ENCODE measurements at regions of chr2 and their contacts with region 1.

Region 1: GRCh38 chr2:1742681-1743395 is 1.5 kb downstream of the PXDN start:
- DNase-seq: peak; percentile 88
- H3K4me3 ChIP-seq: peak overlapping the region; percentile 59 to 82 (median 67)
- H3K27ac ChIP-seq: peak overlapping the region; percentile 87
- H3K4me1 ChIP-seq: peaks cover 25% of the 10 kb centered on the region
- H3K27me3 ChIP-seq: peaks cover 0 to 4% of the 10 kb centered on the region in 2 experiments
- CTCF ChIP-seq: peak; percentile 56 to 62
- POLR2A ChIP-seq: peak; percentile 21

Region 2: DNA sequence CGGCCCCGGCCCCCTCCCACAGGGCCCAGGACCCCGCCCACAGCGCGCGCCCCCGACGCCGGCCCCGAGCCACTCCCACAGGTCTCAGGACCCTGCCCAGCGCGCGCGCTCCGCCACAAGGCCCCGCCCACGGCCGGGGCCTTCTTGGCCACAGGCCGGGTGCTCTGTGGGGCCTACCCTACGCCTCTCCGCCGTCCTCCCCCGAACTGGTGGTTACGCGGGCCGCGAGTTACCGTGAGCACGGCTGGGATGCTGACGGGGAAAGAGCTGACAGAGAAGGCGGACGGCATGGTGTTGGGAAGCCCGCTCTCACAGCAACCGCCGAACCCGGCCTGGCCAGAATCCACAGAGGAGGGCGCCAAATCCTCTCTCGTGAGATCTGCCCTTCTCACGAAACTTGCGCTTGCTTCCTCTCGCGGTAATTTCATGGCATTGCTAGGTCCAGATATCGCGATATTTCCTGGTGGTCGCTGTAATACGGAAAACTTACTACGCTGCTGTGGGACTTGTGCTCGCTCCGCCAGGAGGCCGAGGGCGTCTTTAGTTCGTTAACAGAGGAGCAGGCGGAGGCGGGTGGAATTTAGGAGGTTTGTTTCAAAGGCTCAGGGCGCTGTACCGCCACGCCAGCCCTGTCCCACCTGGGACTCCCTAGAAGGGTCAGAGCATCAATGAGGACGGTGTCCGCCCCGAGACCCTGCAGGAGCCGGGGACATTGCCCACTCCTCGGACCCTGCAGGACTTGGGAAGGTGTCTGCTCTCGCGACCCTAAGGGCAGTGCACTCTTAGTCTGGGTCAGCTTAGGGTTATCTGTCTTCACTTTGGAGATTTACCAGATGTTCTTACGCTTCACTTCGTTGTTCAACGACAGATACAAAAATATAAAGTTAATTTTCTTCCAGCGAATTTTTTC is 1065.5 kb before region 1 on chr2 and contains the start of gene TMEM18:
- CTCF ChIA-PET with region 1: no interaction called
- POLR2A ChIA-PET with region 1: no interaction called
- dilution Hi-C with region 1: no loop called
- intact Hi-C with region 1: loop called (anchors 2 kb)
- DNase-seq: peak; percentile 98
- H3K4me3 ChIP-seq: peak within 1 kb of the TSS; percentile 39 to 80 (median 79)
- H3K27ac ChIP-seq: peak within 1 kb of the TSS; percentile 91
- H3K4me1 ChIP-seq: peaks cover 25% of the 10 kb centered on the region
- H3K27me3 ChIP-seq: no peaks in the 10 kb centered on the region
- CTCF ChIP-seq: peak in 1 of 2 donors; percentile 6
- POLR2A ChIP-seq: peak; percentile 99
- total RNA-seq, gene TMEM18: 23.1 and 23.7 TPM in 2 replicates

Region 3: DNA sequence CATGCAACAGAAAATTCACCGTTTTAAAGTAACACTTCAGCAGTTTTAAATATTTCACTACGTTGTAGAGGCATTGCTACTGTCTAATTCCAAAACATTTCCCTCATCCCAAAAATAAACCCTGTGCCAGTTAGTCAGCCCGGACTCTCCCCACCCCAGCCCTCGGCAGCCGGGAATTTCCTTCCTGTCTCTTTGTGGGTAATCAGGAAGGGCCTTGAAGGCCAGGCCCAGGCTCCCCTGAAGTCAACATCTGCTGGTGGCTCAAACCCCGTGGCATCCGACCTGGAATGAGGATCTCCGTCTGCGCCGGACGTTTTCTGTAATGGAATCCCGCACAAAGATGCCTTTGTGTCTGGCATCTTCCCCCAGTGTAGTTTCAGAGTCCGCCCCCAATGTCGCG is 572.6 kb before region 1 on chr2:
- CTCF ChIA-PET with region 1: no interaction called
- POLR2A ChIA-PET with region 1: no interaction called
- dilution Hi-C with region 1: no loop called
- intact Hi-C with region 1: no loop called
- DNase-seq: no peak
- H3K4me3 ChIP-seq: no peak overlapping the region
- H3K27ac ChIP-seq: no peak overlapping the region
- H3K4me1 ChIP-seq: no peaks in the 10 kb centered on the region
- H3K27me3 ChIP-seq: no peaks in the 10 kb centered on the region
- CTCF ChIP-seq: no peak
- POLR2A ChIP-seq: no peak

Region 4: GRCh38 chr2:1605102-1606045 is 137.5 kb before region 1 on chr2:
- CTCF ChIA-PET with region 1: no interaction called
- POLR2A ChIA-PET with region 1: no interaction called
- dilution Hi-C with region 1: no loop called
- intact Hi-C with region 1: loop called (anchors 1 kb)
- DNase-seq: peak; percentile 57
- H3K4me3 ChIP-seq: no peak overlapping the region
- H3K27ac ChIP-seq: peak overlapping the region; percentile 80
- H3K4me1 ChIP-seq: peaks cover 29% of the 10 kb centered on the region
- H3K27me3 ChIP-seq: peaks cover 0 to 2% of the 10 kb centered on the region in 2 experiments
- CTCF ChIP-seq: no peak
- POLR2A ChIP-seq: no peak

Region 5: DNA sequence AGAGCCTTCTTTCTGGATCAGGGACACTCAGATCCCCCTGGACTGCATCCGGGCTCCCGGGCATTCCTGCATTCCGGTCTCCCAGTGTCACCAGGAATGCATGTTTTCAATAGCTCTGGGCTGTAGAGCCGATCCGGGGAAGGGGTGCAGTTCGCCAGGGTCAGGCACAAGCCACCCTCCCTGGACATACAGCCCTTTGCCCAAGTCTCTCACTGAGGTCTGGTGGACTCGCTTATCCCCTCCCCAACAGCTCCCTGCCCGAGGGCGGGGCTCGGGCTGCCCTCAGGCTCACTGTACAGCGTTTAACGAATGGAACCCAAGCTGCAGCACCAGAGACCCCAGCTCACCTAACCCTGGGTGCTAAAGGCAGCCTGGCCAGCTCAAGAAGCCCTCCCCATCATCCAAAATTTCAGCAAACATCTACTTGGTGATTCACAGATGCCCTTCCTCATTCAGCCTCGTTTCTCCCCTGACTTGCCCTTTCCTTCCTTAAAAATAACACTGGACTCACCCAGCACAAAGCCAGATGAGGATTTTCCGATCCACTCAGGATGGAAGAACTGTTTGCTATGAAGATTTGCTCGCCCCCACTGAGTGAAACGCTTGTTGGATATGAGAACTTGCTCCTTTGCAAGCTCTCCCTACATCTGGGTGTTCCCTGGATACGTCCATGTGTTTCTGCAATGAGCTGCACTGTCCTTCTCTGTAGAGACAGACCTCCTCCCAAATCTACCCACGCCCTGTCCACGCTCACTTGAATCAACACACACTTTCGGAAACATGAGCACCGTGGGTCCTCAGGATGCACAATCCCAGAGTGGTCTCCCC is 56.7 kb before region 1 on chr2:
- CTCF ChIA-PET with region 1: interaction called, 4 read pairs
- POLR2A ChIA-PET with region 1: no interaction called
- dilution Hi-C with region 1: no loop called
- intact Hi-C with region 1: loop called (anchors 2 kb)
- DNase-seq: peak; percentile 8
- H3K4me3 ChIP-seq: no peak overlapping the region
- H3K27ac ChIP-seq: peak overlapping the region; percentile 21
- H3K4me1 ChIP-seq: peaks cover 9% of the 10 kb centered on the region
- H3K27me3 ChIP-seq: no peaks in the 10 kb centered on the region
- CTCF ChIP-seq: no peak
- POLR2A ChIP-seq: no peak

Region 6: DNA sequence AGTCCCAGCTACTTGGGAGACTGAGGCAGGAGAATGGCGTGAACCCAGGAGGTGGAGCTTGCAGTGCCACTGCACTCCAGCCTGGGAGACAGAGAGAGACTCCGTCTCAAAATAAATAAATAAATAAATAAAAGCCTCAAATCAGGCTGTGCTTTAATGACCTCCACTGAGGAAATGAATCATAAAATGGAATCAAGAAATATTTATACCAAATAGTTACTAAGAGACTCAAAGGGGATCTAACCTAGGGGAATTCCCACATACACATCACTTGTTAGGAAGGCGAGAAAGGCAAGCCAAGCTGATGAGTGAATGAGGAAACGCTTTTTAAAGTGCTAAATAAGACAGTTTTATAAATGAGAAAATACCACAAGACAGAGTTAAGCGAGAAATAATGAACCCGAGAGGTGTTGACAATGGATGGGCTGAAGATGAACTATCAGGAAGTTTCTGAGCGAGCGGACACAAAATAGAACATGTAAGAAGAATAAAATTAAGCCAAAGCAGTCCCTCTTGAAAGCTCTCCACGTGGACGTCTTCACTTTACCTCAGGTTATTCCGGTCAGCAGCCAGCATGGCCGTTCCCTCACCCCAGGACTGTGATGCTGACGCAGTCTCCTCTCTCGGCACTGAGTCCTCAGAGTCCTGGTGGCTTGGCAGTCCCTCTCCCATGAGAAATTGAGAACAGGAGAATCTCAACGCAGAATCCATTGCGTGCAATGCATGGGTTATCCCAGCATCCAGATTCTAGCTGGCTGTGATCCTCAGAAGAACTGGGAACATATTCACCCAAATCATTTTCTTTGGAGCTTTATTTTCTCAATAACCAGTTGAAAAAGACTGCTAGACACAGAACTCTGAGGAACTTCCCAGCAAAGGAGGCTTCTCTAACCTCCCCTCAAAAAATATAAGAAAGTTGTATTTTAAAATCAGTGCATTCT is 20.9 kb before region 1 on chr2:
- CTCF ChIA-PET with region 1: interaction called, 12 read pairs
- POLR2A ChIA-PET with region 1: interaction called, 6 read pairs
- dilution Hi-C with region 1: no loop called
- intact Hi-C with region 1: loop called (anchors 1 kb)
- DNase-seq: peak; percentile 91
- H3K4me3 ChIP-seq: peak overlapping the region in 1 of 3 experiments; percentile 51
- H3K27ac ChIP-seq: peak overlapping the region; percentile 98
- H3K4me1 ChIP-seq: peaks cover 34% of the 10 kb centered on the region
- H3K27me3 ChIP-seq: no peaks in the 10 kb centered on the region
- CTCF ChIP-seq: no peak
- POLR2A ChIP-seq: no peak

Region 7: DNA sequence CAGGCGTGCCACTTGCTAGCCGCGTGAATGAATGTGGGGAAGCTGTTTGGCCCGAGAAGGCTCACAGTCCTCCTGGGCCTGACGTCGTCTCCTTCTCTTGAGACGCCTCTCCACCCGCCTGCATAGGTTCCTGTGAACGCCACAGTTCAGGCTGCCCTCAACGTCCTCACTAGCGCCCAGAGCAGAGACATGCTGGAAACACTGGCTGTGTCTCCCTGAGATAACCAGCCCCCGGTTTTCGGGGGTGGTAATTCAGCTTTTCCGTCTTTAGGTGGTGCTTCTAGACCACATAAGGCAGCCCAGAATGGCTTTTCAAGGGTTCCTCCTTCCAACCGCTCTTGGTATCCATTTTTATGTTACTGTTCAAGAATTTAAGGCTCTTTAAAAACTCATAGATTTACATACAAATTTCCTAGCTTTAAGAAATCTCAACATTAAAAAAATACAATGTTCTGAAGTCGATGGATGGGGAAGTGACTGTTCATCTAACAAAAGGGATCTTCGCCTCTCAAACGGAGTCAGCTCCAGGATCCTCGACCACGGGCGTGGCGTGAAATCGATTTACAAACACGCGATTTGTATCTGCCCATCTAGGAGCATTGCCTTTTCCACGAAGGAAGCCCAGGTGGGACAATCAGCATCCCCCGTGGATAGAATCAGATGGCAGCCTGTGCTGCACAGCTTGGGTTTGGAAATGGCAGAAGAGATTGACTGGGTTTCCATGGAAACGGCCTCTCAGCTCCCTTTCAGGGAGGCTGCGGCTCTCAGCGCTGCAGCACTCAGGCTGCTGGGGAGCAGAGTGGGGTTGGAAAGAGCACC is 112.1 kb after region 1 on chr2:
- CTCF ChIA-PET with region 1: no interaction called
- POLR2A ChIA-PET with region 1: no interaction called
- dilution Hi-C with region 1: no loop called
- intact Hi-C with region 1: no loop called
- DNase-seq: no peak
- H3K4me3 ChIP-seq: no peak overlapping the region
- H3K27ac ChIP-seq: no peak overlapping the region
- H3K4me1 ChIP-seq: no peaks in the 10 kb centered on the region
- H3K27me3 ChIP-seq: no peaks in the 10 kb centered on the region
- CTCF ChIP-seq: no peak
- POLR2A ChIP-seq: no peak

Region 8: GRCh38 chr2:1990724-1991123 is 247.9 kb after region 1 on chr2:
- CTCF ChIA-PET with region 1: no interaction called
- POLR2A ChIA-PET with region 1: no interaction called
- dilution Hi-C with region 1: no loop called
- intact Hi-C with region 1: no loop called
- DNase-seq: no peak
- H3K4me3 ChIP-seq: no peak overlapping the region
- H3K27ac ChIP-seq: no peak overlapping the region
- H3K4me1 ChIP-seq: no peaks in the 10 kb centered on the region
- H3K27me3 ChIP-seq: no peaks in the 10 kb centered on the region
- CTCF ChIP-seq: no peak
- POLR2A ChIP-seq: no peak

Region 9: DNA sequence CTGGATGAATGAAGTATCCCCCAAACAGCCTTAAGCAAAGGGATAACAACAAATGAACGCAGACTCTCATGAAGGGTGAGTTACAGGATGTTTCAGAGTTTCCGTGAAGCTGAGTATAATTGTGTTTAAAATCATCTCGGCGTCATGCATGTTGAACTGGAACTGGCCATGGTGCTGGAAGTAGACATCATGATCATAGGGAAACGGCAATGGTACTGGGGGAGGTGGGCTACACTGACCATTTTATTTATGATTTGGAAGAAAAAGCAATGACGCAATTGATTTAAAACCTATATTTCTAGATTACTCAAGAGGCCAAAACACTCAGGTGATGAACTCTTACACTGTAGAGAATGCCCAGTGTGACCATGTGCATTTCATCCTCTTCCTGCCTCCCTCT is 976.2 kb after region 1 on chr2:
- CTCF ChIA-PET with region 1: no interaction called
- POLR2A ChIA-PET with region 1: no interaction called
- dilution Hi-C with region 1: no loop called
- intact Hi-C with region 1: no loop called
- DNase-seq: no peak
- H3K4me3 ChIP-seq: no peak overlapping the region
- H3K27ac ChIP-seq: no peak overlapping the region
- H3K4me1 ChIP-seq: no peaks in the 10 kb centered on the region
- H3K27me3 ChIP-seq: no peaks in the 10 kb centered on the region
- CTCF ChIP-seq: no peak
- POLR2A ChIP-seq: no peak

Measured in endothelial cell of umbilical vein (primary cell).